H1 (cell line): ENCODE measurements at regions of chr18 and their contacts with region 1.

Region 1: GRCh38 chr18:37476182-37476581 is 89.4 kb downstream of the CELF4 start:
- DNase-seq: peak in 1 of 2 experiments; percentile 79
- H3K4me3 ChIP-seq: no peak overlapping the region
- H3K27ac ChIP-seq: no peak overlapping the region
- H3K4me1 ChIP-seq: peaks cover 0 to 6% (median 0%) of the 10 kb centered on the region in 4 experiments; a peak in 2 of 7 replicates
- H3K27me3 ChIP-seq: no peaks in the 10 kb centered on the region
- CTCF ChIP-seq: peak; percentile 69 to 94 (median 75)
- EP300 ChIP-seq: no peak
- POLR2A ChIP-seq: no peak
- RAD21 ChIP-seq: peak; percentile 71 to 79

Region 2: DNA sequence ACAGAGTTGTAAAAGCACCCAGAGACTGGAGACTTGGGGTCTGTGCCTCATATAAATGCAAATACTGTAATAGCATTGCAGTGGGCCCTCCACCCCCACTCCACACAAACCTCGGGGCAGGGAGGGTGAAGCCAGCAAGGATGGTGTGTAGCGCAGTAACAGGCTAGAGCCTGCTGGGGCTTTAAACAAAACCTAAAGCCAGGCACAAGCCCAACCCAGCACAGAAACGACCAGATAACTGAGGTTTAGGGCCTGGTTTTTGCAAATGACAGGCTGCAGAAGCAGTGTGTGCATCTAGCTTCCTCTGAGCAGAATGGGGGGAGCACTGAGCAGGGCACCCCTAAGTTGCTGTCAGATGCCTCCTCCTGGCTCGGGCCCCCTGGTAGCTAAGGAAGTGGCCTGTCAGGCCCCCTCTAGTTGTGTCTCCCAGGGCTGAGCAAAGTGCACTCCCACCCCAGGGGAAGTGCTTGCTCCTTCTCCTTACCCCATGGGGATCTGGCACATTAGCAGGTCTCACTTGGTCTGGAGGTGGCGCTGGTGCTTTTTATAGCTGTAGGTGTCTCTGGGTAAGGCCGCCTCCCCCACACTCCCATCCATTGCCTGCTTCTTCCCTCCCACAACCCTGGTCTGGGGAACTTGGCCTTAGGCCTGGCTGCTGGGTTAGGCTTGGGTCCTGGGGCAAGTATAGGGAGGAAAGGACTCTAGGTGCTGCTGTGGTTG is 45.7 kb before region 1 on chr18:
- CTCF ChIA-PET with region 1: interaction called, 12 read pairs
- POLR2A ChIA-PET with region 1: no interaction called
- DNase-seq: peak; percentile 27 to 60
- H3K4me3 ChIP-seq: no peak overlapping the region
- H3K27ac ChIP-seq: no peak overlapping the region
- H3K4me1 ChIP-seq: peaks cover 0 to 5% (median 3%) of the 10 kb centered on the region in 4 experiments; a peak in 4 of 7 replicates
- H3K27me3 ChIP-seq: no peaks in the 10 kb centered on the region
- CTCF ChIP-seq: peak; percentile 47 to 62 (median 56)
- EP300 ChIP-seq: no peak
- POLR2A ChIP-seq: no peak
- RAD21 ChIP-seq: peak; percentile 67 to 68

Region 3: DNA sequence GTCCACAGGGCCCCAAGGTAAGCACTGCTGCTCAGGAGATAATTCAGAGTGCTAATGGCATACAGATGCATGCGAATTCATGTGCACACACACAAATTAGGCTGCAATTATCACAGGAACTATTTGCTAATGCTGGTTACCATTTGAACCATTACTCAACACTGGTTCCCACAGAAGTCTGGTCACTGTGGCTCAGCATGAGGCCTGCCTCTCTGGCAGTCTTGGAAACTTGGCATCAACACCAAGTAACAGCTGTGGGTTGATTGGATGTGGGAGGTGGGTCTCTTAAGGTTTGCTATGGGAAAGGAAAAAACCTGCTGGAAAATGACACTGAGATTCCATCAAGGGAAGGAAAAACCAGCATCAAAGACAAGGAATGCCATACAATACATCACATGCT is 15.6 kb before region 1 on chr18:
- CTCF ChIA-PET with region 1: interaction called, 33 read pairs
- POLR2A ChIA-PET with region 1: interaction called, 4 read pairs
- DNase-seq: no peak
- H3K4me3 ChIP-seq: no peak overlapping the region
- H3K27ac ChIP-seq: no peak overlapping the region
- H3K4me1 ChIP-seq: no peaks in the 10 kb centered on the region; a peak in 1 of 7 replicates
- H3K27me3 ChIP-seq: no peaks in the 10 kb centered on the region; a peak in 2 of 7 replicates
- CTCF ChIP-seq: no peak
- EP300 ChIP-seq: no peak
- POLR2A ChIP-seq: no peak
- RAD21 ChIP-seq: no peak

Region 4: GRCh38 chr18:37493352-37493935 is 17.3 kb after region 1 on chr18:
- CTCF ChIA-PET with region 1: interaction called, 66 read pairs
- POLR2A ChIA-PET with region 1: no interaction called
- DNase-seq: no peak
- H3K4me3 ChIP-seq: no peak overlapping the region
- H3K27ac ChIP-seq: no peak overlapping the region
- H3K4me1 ChIP-seq: peaks cover 0 to 29% (median 11%) of the 10 kb centered on the region in 4 experiments; a peak in 6 of 7 replicates
- H3K27me3 ChIP-seq: peaks cover 0 to 3% (median 0%) of the 10 kb centered on the region in 4 experiments; a peak in 4 of 7 replicates
- CTCF ChIP-seq: peak in 1 of 3 experiments; percentile 19; a peak in 1 of 4 replicates
- EP300 ChIP-seq: no peak
- POLR2A ChIP-seq: no peak
- RAD21 ChIP-seq: peak; percentile 11 to 31; a peak in 1 of 4 replicates